ENCODE measurements at regions of chr12 and their contacts with region 1.

Region 1: GRCh38 chr12:114684098-114684869 is at the start of gene TBX3:
- ATAC-seq: peak; percentile 79 to 94 (median 92)
- H3K4me3 ChIP-seq: peak within 1 kb of the TSS; percentile 34 to 48 (median 42)
- H3K27ac ChIP-seq: no peak within 1 kb of the TSS
- H3K4me1 ChIP-seq: peaks cover 0 to 8% of the 10 kb centered on the region in 2 donors
- total RNA-seq, gene TBX3: 0.11 to 17.4 (median 2.0) TPM

Region 2: GRCh38 chr12:114955414-114956014 is 271.2 kb after region 1 on chr12:
- in situ Hi-C with region 1: no loop called
- ATAC-seq: no peak
- H3K4me3 ChIP-seq: no peak overlapping the region
- H3K27ac ChIP-seq: no peak overlapping the region
- H3K4me1 ChIP-seq: peaks cover 0 to 4% of the 10 kb centered on the region in 2 donors

Region 3: DNA sequence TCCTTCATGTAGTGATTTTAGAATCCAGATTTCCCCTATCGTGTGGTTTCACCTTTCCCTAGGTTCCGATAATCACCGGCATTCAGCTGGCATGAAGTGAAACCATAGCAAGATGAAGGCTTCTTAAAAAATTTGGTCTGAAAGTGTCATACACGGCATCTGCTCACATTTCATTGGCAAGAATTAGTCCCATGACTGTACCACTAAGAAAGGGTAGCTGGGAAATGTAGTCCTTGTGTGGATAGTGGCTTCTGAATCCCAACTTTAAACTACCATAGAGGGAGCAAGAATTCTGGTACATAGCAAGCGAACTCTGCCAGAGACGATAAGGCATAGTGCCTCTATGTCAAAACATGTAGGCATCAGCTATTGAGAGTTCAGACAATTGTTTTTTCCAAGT is 359.8 kb after region 1 on chr12:
- in situ Hi-C with region 1: loop called in 1 of 9 experiments (anchors 25 kb)
- ATAC-seq: no peak
- H3K4me3 ChIP-seq: no peak overlapping the region
- H3K27ac ChIP-seq: no peak overlapping the region
- H3K4me1 ChIP-seq: no peaks in the 10 kb centered on the region

Region 4: GRCh38 chr12:115135800-115136211 is 451.5 kb after region 1 on chr12:
- in situ Hi-C with region 1: loop called in 1 of 9 experiments (anchors 25 kb)
- ATAC-seq: no peak
- H3K4me3 ChIP-seq: no peak overlapping the region
- H3K27ac ChIP-seq: no peak overlapping the region
- H3K4me1 ChIP-seq: no peaks in the 10 kb centered on the region

Region 5: GRCh38 chr12:115354007-115354452 is 669.7 kb after region 1 on chr12:
- in situ Hi-C with region 1: loop called in 1 of 9 experiments (anchors 25 kb)
- ATAC-seq: peak in 7 of 8 experiments; percentile 26 to 88 (median 76)
- H3K4me3 ChIP-seq: no peak overlapping the region
- H3K27ac ChIP-seq: no peak overlapping the region
- H3K4me1 ChIP-seq: no peaks in the 10 kb centered on the region

Region 6: GRCh38 chr12:115632308-115632707 is 948.0 kb after region 1 on chr12:
- in situ Hi-C with region 1: loop called in 1 of 9 experiments (anchors 25 kb)
- ATAC-seq: peak in 1 of 8 experiments; percentile 30
- H3K4me3 ChIP-seq: no peak overlapping the region
- H3K27ac ChIP-seq: no peak overlapping the region
- H3K4me1 ChIP-seq: peaks cover 5 to 8% of the 10 kb centered on the region in 2 donors